ENCODE measurements at regions of chr2 and their contacts with region 1.

Region 1: GRCh38 chr2:148509288-148509902 is 135.2 kb upstream of the EPC2 start:
- DNase-seq: peak; percentile 66 to 86 (median 75)
- H3K4me3 ChIP-seq: peak overlapping the region; percentile 49
- H3K4me3 Mint-ChIP-seq: peak overlapping the region; percentile 57 to 91 (median 83)
- H3K27ac ChIP-seq: no peak overlapping the region
- H3K27ac Mint-ChIP-seq: peak overlapping the region; percentile 38 to 88 (median 74)
- H3K4me1 ChIP-seq: peaks cover 5% of the 10 kb centered on the region
- H3K4me1 Mint-ChIP-seq: peaks cover 10 to 14% (median 13%) of the 10 kb centered on the region in 3 donors
- H3K27me3 ChIP-seq: no peaks in the 10 kb centered on the region
- H3K27me3 Mint-ChIP-seq: no peaks in the 10 kb centered on the region

Region 2: GRCh38 chr2:147934881-147935620 is 574.3 kb before region 1 on chr2:
- CTCF ChIA-PET with region 1: interaction called, 13 read pairs
- POLR2A ChIA-PET with region 1: no interaction called
- DNase-seq: no peak
- H3K4me3 ChIP-seq: no peak overlapping the region
- H3K4me3 Mint-ChIP-seq: no peak overlapping the region
- H3K27ac ChIP-seq: no peak overlapping the region
- H3K27ac Mint-ChIP-seq: no peak overlapping the region
- H3K4me1 ChIP-seq: no peaks in the 10 kb centered on the region
- H3K4me1 Mint-ChIP-seq: no peaks in the 10 kb centered on the region
- H3K27me3 ChIP-seq: no peaks in the 10 kb centered on the region
- H3K27me3 Mint-ChIP-seq: no peaks in the 10 kb centered on the region

Region 3: GRCh38 chr2:147989809-147990403 is 519.5 kb before region 1 on chr2:
- CTCF ChIA-PET with region 1: interaction called, 32 read pairs
- POLR2A ChIA-PET with region 1: no interaction called
- DNase-seq: peak in 3 of 5 donors; percentile 38 to 49 (median 47)
- H3K4me3 ChIP-seq: no peak overlapping the region
- H3K4me3 Mint-ChIP-seq: no peak overlapping the region
- H3K27ac ChIP-seq: no peak overlapping the region
- H3K27ac Mint-ChIP-seq: peak overlapping the region in 2 of 8 donors; percentile 29 to 48
- H3K4me1 ChIP-seq: peaks cover under 1% of the 10 kb centered on the region
- H3K4me1 Mint-ChIP-seq: peaks cover 29 to 44% (median 38%) of the 10 kb centered on the region in 3 donors
- H3K27me3 ChIP-seq: no peaks in the 10 kb centered on the region
- H3K27me3 Mint-ChIP-seq: no peaks in the 10 kb centered on the region

Region 4: GRCh38 chr2:148524519-148524919 is 15.1 kb after region 1 on chr2:
- CTCF ChIA-PET with region 1: interaction called, 15 read pairs
- POLR2A ChIA-PET with region 1: interaction called, 5 read pairs
- DNase-seq: peak in 4 of 5 donors; percentile 40 to 84 (median 74)
- H3K4me3 ChIP-seq: no peak overlapping the region
- H3K4me3 Mint-ChIP-seq: peak overlapping the region; percentile 6 to 62 (median 50)
- H3K27ac ChIP-seq: no peak overlapping the region
- H3K27ac Mint-ChIP-seq: peak overlapping the region; percentile 83 to 97 (median 92)
- H3K4me1 ChIP-seq: peaks cover 78% of the 10 kb centered on the region
- H3K4me1 Mint-ChIP-seq: peaks cover 70 to 89% (median 83%) of the 10 kb centered on the region in 3 donors
- H3K27me3 ChIP-seq: no peaks in the 10 kb centered on the region
- H3K27me3 Mint-ChIP-seq: peaks cover 0 to 3% of the 10 kb centered on the region in 2 donors

Region 5: GRCh38 chr2:148552675-148553331 is 43.4 kb after region 1 on chr2:
- CTCF ChIA-PET with region 1: interaction called, 12 read pairs
- POLR2A ChIA-PET with region 1: no interaction called
- DNase-seq: peak in 3 of 5 donors; percentile 14 to 48 (median 34)
- H3K4me3 ChIP-seq: peak overlapping the region; percentile 82
- H3K4me3 Mint-ChIP-seq: no peak overlapping the region
- H3K27ac ChIP-seq: peak overlapping the region; percentile 45
- H3K27ac Mint-ChIP-seq: no peak overlapping the region
- H3K4me1 ChIP-seq: peaks cover 8% of the 10 kb centered on the region
- H3K4me1 Mint-ChIP-seq: peaks cover 0 to 3% (median 3%) of the 10 kb centered on the region in 3 donors
- H3K27me3 ChIP-seq: no peaks in the 10 kb centered on the region
- H3K27me3 Mint-ChIP-seq: no peaks in the 10 kb centered on the region

Region 6: GRCh38 chr2:148590612-148591011 is 81.2 kb after region 1 on chr2:
- CTCF ChIA-PET with region 1: no interaction called
- POLR2A ChIA-PET with region 1: no interaction called
- DNase-seq: no peak
- H3K4me3 ChIP-seq: no peak overlapping the region
- H3K4me3 Mint-ChIP-seq: peak overlapping the region in 1 of 7 donors; percentile 37
- H3K27ac ChIP-seq: no peak overlapping the region
- H3K27ac Mint-ChIP-seq: no peak overlapping the region
- H3K4me1 ChIP-seq: no peaks in the 10 kb centered on the region
- H3K4me1 Mint-ChIP-seq: no peaks in the 10 kb centered on the region
- H3K27me3 ChIP-seq: no peaks in the 10 kb centered on the region
- H3K27me3 Mint-ChIP-seq: peaks cover 0 to 2% of the 10 kb centered on the region in 2 donors

Region 7: GRCh38 chr2:148739454-148740105 is 230.2 kb after region 1 on chr2:
- CTCF ChIA-PET with region 1: no interaction called
- POLR2A ChIA-PET with region 1: interaction called, 14 read pairs
- DNase-seq: no peak
- H3K4me3 ChIP-seq: no peak overlapping the region
- H3K4me3 Mint-ChIP-seq: peak overlapping the region in 2 of 7 donors; percentile 32 to 56
- H3K27ac ChIP-seq: no peak overlapping the region
- H3K27ac Mint-ChIP-seq: peak overlapping the region in 2 of 8 donors; percentile 3 to 91
- H3K4me1 ChIP-seq: peaks cover 7% of the 10 kb centered on the region
- H3K4me1 Mint-ChIP-seq: peaks cover 52 to 84% (median 82%) of the 10 kb centered on the region in 3 donors
- H3K27me3 ChIP-seq: no peaks in the 10 kb centered on the region
- H3K27me3 Mint-ChIP-seq: no peaks in the 10 kb centered on the region

Region 8: GRCh38 chr2:148781544-148781943 is 272.1 kb after region 1 on chr2:
- CTCF ChIA-PET with region 1: no interaction called
- POLR2A ChIA-PET with region 1: no interaction called
- DNase-seq: no peak
- H3K4me3 ChIP-seq: no peak overlapping the region
- H3K4me3 Mint-ChIP-seq: no peak overlapping the region
- H3K27ac ChIP-seq: no peak overlapping the region
- H3K27ac Mint-ChIP-seq: no peak overlapping the region
- H3K4me1 ChIP-seq: no peaks in the 10 kb centered on the region
- H3K4me1 Mint-ChIP-seq: peaks cover 8 to 20% (median 17%) of the 10 kb centered on the region in 3 donors
- H3K27me3 ChIP-seq: no peaks in the 10 kb centered on the region
- H3K27me3 Mint-ChIP-seq: no peaks in the 10 kb centered on the region